Lower lobe of right lung (tissue), 2 donors: ENCODE measurements at regions of chr1 and their contacts with region 1.

Region 1: DNA sequence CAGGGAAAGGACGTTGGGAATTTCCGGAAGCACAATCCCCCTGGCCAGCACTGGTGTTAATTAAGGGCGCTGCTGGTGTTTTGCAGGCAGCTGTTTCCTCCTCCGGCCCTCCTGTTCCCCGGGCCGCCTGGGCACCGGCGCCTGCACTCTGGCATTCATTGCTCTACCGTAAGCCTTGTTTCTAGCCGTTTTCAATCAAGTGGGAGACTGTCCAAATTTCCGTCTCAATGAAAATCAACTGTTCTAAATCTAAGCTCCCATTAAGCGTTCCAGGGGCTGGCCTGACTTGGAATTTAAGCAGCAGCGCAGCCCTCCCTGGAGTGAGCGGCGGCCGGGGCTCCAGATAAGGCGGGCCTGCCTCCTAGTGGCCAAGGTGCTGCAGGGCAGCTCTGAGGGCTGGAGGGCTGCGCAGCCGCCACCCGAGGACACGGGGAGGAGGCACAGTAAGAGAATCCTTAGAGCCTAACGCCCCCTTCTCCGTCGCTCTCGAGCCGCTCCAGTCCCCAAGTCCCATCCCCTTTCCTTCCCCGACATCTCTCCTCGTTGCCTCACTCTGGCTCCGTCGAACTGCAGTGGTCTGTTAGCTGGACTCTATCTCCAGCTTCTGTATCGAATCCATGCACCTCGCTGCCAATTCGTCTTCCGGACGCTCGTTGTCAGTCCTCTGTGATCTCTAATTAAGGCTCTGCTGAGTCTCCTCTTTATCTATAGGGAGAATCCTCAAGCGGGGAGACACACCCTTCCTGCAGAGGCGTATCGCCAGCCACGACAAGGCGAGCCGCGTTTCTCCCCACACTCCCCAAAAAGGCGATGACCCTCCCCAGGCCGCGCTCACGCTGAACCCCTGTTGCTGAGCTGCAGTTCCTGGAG is 57.8 kb upstream of the LRRC8D start:
- DNase-seq: peak; percentile 92
- ATAC-seq: peak; percentile 99
- H3K4me3 ChIP-seq: peak overlapping the region; percentile 54
- H3K27ac ChIP-seq: peak overlapping the region; percentile 44
- H3K4me1 ChIP-seq: peaks cover 52% of the 10 kb centered on the region
- H3K27me3 ChIP-seq: no peaks in the 10 kb centered on the region
- CTCF ChIP-seq: peak; percentile 99

Region 2: DNA sequence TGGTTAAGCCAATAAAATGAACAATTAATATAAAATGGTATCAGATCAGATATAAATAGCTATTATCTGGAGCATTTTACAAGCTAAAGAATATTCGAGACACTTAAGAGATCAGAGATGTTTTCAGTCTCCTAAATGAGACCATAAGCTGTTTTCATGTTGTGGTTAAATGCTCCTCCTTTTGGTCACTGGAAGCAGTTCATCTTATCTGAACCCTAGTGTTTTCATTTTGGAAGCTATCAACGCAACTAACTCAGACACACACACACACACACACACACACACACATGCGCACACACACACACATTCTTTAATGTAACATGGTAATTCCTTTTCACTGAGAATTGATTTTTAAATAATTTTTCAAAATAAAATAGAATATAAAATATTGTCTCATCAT is 140.1 kb before region 1 on chr1:
- intact Hi-C with region 1: loop called (anchors 10 kb)
- DNase-seq: no peak
- ATAC-seq: no peak
- H3K4me3 ChIP-seq: no peak overlapping the region
- H3K27ac ChIP-seq: no peak overlapping the region
- H3K4me1 ChIP-seq: no peaks in the 10 kb centered on the region
- H3K27me3 ChIP-seq: no peaks in the 10 kb centered on the region
- CTCF ChIP-seq: no peak

Region 3: GRCh38 chr1:89843281-89844121 is 80.5 kb after region 1 on chr1:
- intact Hi-C with region 1: no loop called
- DNase-seq: peak; percentile 79
- ATAC-seq: peak; percentile 95 to 98
- H3K4me3 ChIP-seq: peak overlapping the region; percentile 73
- H3K27ac ChIP-seq: peak overlapping the region; percentile 74
- H3K4me1 ChIP-seq: peaks cover 14% of the 10 kb centered on the region
- H3K27me3 ChIP-seq: no peaks in the 10 kb centered on the region
- CTCF ChIP-seq: peak; percentile 73